Lower leg skin (tissue), 4 donors: ENCODE measurements at regions of chr13 and their contacts with region 1.

Region 1: DNA sequence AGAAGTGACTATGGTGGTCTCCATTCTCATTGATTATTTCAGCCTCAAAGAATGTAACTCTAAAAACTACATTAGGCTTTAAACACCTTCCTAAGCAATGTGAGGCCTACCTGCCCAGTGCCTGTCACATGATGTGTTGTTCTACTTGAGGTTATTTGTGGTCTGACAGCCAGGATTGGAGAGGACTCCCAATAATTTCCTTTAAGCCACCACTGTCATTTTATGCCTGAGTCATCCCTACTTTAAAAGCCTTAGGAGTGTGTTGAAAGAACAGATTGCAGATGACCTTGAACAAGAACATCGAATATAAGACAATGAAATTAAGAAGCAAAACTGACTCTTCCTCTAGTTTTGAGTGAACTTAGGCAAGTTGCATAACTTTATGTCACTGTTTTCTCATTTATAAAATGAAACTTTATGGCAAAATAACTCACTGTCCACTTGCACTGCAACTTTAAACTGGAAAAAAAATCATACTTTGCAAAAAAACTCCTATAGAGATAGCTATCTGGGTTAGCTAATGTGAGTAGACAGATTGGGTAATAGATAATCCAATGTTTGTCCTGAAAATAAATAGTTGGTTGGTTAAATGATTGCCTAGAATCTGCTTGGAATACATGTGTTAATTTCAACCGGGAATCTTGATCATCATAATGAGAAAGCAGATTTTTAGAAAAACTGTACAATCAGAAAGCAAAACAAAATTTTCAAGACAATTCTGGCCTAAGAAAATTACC is 361.2 kb downstream of the SUCLA2 start:
- DNase-seq: no peak
- H3K4me3 ChIP-seq: no peak overlapping the region
- CTCF ChIP-seq: no peak
- POLR2A ChIP-seq: no peak

Region 2: GRCh38 chr13:47603365-47603764 is 36.5 kb before region 1 on chr13:
- intact Hi-C with region 1: no loop called
- DNase-seq: no peak
- H3K4me3 ChIP-seq: no peak overlapping the region
- CTCF ChIP-seq: no peak
- POLR2A ChIP-seq: no peak

Region 3: DNA sequence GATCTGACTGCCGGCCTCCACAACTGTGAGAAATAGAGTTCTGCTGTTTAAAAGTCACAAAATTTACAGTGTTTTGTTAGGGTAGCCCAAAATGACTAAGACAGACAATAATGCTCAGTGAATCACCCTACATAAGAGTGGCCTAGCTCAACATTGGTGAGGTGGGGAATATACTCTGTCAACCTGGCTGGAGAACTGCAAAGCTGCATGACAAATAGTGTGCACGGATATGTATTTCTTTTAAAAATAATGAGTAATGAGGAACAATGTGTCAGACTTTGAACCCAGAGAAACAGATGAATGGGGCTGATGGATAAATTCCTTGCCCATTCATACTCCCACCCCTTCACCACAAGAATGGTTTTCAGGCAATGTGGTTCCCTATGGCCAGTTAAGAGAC is 11.2 kb before region 1 on chr13:
- intact Hi-C with region 1: loop called (anchors 1 kb)
- DNase-seq: no peak
- H3K4me3 ChIP-seq: no peak overlapping the region
- CTCF ChIP-seq: no peak
- POLR2A ChIP-seq: no peak